Dendritic cell treated with granulocyte-macrophage colony-stimulating factor and Interleukin-4, amounts not matched to agents 40 ng/mL and 50 ng/mL, for 4 days (primary cell): ENCODE measurements at regions of chr22 and their contacts with region 1.

Region 1: DNA sequence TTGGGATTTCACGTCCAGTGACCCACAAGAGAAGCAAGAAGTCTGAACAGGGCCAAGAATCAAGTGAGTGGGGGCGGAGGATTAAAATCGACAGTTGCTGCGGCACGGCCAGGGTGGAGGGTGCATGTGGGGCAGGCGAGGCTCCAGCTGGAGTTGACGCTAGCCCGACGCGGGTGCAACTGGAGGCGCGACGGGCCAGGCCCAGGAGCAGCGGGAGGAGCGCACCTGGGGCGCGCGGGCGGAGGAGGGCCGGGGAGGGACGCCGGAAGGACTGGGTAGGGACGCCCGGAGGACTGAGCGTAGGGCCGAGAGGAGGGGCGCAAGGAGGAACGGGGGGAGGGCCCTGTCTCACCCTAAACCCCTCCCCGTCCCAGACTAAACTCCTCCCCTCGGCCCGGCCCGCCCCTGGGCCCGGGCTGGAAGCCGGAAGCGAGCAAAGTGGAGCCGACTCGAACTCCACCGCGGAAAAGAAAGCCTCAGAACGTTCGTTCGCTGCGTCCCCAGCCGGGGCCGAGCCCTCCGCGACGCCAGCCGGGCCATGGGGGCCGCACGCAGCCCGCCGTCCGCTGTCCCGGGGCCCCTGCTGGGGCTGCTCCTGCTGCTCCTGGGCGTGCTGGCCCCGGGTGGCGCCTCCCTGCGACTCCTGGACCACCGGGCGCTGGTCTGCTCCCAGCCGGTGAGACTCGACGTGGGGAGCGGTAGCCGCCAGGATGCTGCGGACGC is at the start of gene IL17RA:
- H3K4me3 Mint-ChIP-seq: peak within 1 kb of the TSS; percentile 96
- H3K27ac Mint-ChIP-seq: peak within 1 kb of the TSS; percentile 97
- H3K4me1 Mint-ChIP-seq: peaks cover 46% of the 10 kb centered on the region
- H3K27me3 Mint-ChIP-seq: no peaks in the 10 kb centered on the region

Region 2: GRCh38 chr22:17074648-17075002 is 10.1 kb before region 1 on chr22:
- intact Hi-C with region 1: loop called (anchors 1 kb)
- H3K4me3 Mint-ChIP-seq: no peak overlapping the region
- H3K27ac Mint-ChIP-seq: no peak overlapping the region
- H3K4me1 Mint-ChIP-seq: peaks cover 18% of the 10 kb centered on the region
- H3K27me3 Mint-ChIP-seq: peaks cover 2% of the 10 kb centered on the region

Region 3: GRCh38 chr22:17106785-17107546 is 22.3 kb after region 1 on chr22:
- intact Hi-C with region 1: loop called (anchors 2 kb)
- H3K4me3 Mint-ChIP-seq: peak overlapping the region; percentile 60
- H3K27ac Mint-ChIP-seq: peak overlapping the region; percentile 91
- H3K4me1 Mint-ChIP-seq: peaks cover 87% of the 10 kb centered on the region
- H3K27me3 Mint-ChIP-seq: no peaks in the 10 kb centered on the region

Region 4: DNA sequence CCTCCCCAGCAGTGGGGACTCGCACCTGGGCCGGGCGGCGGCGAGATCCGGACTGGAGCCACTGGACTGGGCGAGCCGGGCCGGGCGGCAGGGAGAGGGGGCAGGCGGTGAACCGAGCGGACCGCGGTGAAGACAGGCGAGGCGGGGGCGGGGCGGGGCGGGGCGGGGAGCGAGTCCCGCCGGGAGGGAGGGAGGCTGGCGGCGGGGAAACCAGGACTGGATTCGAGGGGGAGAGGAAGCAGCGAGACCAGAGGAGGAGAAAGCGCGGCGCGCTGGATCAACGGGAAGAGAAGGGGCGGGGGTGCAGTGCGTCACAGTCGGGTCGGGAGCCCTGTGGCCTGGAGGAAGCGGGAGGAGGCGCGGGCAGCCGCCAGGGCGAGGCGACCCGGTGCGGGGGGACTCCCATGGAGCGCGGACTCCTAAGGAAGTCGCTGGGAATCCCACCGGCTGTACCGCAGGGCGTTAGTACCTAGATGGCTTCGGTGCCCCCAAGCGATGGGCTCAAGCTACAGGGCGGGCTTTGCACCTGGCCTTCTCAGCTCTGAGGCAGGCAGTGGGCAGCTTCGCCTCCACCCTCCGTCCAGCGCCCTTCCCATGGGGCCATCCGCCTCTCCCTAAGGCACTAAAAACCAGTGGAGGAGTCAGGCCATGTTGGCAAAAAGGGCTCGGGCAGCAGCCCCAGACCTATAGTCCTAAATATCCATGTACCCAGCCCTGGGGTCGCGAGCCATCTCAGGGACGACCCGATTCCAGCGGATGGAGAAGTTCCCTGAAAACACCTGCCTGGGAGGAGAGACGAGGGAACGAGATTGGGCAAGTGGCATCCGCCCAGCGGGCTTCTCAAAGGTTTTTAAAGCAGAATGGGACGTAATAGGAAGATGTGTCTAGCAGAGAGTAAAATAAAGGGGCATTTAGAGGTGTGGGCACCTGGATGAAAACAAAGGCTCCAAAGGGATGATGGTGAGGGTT is 36.8 kb after region 1 on chr22 and contains the start of gene TMEM121B:
- intact Hi-C with region 1: loop called (anchors 5 kb)
- H3K4me3 Mint-ChIP-seq: peak within 1 kb of the TSS; percentile 82
- H3K27ac Mint-ChIP-seq: no peak within 1 kb of the TSS
- H3K4me1 Mint-ChIP-seq: peaks cover 49% of the 10 kb centered on the region
- H3K27me3 Mint-ChIP-seq: peaks cover 17% of the 10 kb centered on the region

Region 5: GRCh38 chr22:17158568-17159503 is 74.1 kb after region 1 on chr22 and contains the start of gene HDHD5:
- intact Hi-C with region 1: loop called (anchors 2 kb)
- H3K4me3 Mint-ChIP-seq: peak within 1 kb of the TSS; percentile 88
- H3K27ac Mint-ChIP-seq: peak within 1 kb of the TSS; percentile 88
- H3K4me1 Mint-ChIP-seq: peaks cover 45% of the 10 kb centered on the region
- H3K27me3 Mint-ChIP-seq: no peaks in the 10 kb centered on the region